Endothelial cell of umbilical vein (primary cell): ENCODE measurements at regions of chr20 and their contacts with region 1.

Region 1: GRCh38 chr20:50790651-50791277 is 4.1 kb upstream of the BCAS4 start:
- DNase-seq: peak; percentile 73
- H3K4me3 ChIP-seq: no peak overlapping the region
- H3K27ac ChIP-seq: peak overlapping the region; percentile 64
- H3K4me1 ChIP-seq: peaks cover 10% of the 10 kb centered on the region
- H3K27me3 ChIP-seq: peaks cover 0 to 4% of the 10 kb centered on the region in 2 experiments
- CTCF ChIP-seq: peak; percentile 87 to 97
- POLR2A ChIP-seq: peak; percentile 71

Region 2: DNA sequence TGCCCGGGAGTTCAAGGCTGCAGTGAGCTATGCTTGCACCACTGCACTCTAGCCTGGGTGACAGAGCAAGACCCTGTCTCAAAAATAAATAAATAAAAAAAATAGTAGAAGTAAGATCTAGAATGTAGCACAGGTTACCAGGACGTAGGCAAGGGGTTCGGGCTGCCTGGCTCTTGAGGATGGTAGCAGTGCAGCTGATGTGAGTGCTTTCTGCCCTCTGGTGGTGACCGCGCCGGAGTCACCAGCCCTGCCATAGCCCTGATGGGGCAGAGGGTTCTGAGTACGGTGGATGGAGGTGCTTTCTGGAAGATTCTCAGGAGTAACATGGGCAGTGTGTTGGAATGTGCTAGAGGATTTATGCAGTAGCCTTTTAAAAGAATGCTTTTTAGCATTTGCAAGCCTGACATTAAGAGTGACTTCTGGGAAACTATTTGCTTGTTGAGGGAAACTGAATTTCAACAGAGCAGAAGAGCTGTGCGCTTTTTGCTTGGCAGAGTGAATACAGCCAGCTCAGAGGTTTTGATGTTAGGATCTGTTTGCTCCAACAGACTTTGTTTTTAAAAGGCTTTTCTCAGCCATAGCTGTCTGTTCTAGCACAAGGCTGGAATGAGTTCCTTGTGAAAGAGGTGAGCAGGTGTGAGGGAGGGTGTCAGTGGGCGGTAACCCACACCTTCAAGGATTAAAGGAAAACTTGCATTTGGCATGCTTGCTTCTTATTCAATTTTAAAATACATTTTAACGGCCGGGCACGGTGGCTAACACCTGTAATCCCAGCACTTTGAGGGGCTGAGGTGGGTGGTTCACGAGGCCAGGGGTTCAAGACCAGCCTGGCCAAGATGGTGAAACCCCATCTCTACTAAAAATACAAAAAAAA is 214.7 kb before region 1 on chr20:
- CTCF ChIA-PET with region 1: no interaction called
- POLR2A ChIA-PET with region 1: no interaction called
- dilution Hi-C with region 1: no loop called
- intact Hi-C with region 1: no loop called
- DNase-seq: peak; percentile 61
- H3K4me3 ChIP-seq: no peak overlapping the region
- H3K27ac ChIP-seq: no peak overlapping the region
- H3K4me1 ChIP-seq: peaks cover 28% of the 10 kb centered on the region
- H3K27me3 ChIP-seq: no peaks in the 10 kb centered on the region
- CTCF ChIP-seq: peak; percentile 81 to 82
- POLR2A ChIP-seq: no peak

Region 3: DNA sequence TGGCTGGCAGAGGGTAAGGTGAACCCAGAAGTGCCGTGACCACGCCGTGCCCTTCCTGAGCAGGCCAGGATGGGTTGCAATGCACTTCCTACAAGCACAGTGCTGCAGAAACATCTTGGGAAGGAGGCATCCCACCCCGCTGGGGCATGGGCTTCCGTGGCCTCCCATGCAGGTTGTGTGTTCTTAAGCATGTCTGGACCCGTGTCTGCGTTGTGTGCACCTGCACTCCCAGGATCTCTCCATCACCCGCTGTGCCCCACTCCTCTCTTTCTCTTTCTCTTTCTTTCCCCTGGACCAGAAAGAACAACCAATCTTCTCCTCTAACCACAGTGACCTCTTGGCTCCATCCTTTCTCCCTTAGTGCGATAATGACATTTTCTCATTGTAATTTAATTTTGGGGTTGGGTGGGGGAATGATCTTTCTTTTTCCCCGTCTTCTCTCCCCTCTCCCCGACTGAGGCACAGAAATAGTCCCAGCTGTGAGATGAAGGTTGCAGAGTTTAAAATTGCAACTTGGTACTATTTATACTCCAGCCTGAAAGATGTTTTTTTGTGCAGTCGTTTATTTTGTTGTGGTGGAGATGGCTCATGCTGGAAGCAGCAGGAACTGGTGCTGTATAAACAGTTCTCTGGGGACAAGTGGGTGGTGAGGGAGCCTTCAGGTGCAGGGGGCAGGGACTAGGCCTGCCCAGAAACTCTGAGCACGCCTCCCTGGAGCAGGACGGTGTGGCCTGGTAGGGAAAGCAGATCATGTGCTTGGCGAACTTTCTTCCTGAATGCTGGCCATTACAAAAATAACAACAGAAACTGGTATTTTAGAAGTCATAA is 24.6 kb after region 1 on chr20:
- CTCF ChIA-PET with region 1: interaction called, 27 read pairs
- POLR2A ChIA-PET with region 1: no interaction called
- dilution Hi-C with region 1: no loop called
- intact Hi-C with region 1: loop called (anchors 1 kb)
- DNase-seq: no peak
- H3K4me3 ChIP-seq: no peak overlapping the region
- H3K27ac ChIP-seq: no peak overlapping the region
- H3K4me1 ChIP-seq: no peaks in the 10 kb centered on the region
- H3K27me3 ChIP-seq: no peaks in the 10 kb centered on the region
- CTCF ChIP-seq: no peak
- POLR2A ChIP-seq: no peak

Region 4: DNA sequence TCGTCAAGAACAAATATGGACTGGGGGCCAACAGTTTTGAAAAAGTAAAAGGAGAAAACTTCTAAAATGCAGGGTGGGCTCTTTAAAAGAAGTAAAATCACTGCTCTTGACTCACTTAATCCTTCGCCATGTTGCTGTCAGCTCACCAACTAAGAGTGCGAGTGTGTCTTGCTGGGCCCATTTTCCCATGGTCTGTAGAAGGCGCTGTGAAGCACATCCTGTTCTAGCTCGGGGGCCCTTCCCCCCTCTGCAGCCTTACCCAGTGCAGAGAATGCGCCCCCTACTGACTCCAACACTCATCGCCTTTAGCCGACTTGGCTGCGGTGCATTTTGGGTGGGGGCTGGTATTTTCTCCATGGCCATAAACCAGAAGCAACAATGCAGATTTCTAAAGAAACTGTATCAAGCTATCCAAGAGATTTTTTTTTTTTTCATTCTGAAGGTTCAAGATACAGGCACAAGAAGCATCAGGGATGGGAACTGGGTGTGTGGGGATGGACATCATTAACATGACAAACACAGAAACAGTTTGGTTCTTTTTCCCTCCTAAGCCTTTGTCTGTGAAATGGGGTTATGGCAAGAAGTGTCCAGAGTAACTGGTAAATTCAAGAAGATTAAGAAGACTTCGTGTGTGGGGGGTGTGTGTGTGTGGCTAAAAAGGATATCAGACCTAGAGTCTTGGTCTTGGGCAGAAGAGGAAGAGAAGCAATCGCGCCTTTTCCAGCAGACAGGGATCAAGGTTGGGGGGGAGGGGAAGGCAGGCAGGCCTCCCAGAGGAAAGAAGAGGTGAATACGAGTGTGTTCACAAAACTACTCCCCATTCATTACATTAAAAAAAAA is 138.8 kb after region 1 on chr20:
- CTCF ChIA-PET with region 1: interaction called, 119 read pairs
- POLR2A ChIA-PET with region 1: interaction called, 6 read pairs
- dilution Hi-C with region 1: no loop called
- intact Hi-C with region 1: loop called (anchors 1 kb)
- DNase-seq: peak; percentile 92
- H3K4me3 ChIP-seq: peak overlapping the region; percentile 63 to 100 (median 90)
- H3K27ac ChIP-seq: peak overlapping the region; percentile 50
- H3K4me1 ChIP-seq: peaks cover 22% of the 10 kb centered on the region
- H3K27me3 ChIP-seq: no peaks in the 10 kb centered on the region
- CTCF ChIP-seq: peak; percentile 95 to 98
- POLR2A ChIP-seq: peak; percentile 15

Region 5: DNA sequence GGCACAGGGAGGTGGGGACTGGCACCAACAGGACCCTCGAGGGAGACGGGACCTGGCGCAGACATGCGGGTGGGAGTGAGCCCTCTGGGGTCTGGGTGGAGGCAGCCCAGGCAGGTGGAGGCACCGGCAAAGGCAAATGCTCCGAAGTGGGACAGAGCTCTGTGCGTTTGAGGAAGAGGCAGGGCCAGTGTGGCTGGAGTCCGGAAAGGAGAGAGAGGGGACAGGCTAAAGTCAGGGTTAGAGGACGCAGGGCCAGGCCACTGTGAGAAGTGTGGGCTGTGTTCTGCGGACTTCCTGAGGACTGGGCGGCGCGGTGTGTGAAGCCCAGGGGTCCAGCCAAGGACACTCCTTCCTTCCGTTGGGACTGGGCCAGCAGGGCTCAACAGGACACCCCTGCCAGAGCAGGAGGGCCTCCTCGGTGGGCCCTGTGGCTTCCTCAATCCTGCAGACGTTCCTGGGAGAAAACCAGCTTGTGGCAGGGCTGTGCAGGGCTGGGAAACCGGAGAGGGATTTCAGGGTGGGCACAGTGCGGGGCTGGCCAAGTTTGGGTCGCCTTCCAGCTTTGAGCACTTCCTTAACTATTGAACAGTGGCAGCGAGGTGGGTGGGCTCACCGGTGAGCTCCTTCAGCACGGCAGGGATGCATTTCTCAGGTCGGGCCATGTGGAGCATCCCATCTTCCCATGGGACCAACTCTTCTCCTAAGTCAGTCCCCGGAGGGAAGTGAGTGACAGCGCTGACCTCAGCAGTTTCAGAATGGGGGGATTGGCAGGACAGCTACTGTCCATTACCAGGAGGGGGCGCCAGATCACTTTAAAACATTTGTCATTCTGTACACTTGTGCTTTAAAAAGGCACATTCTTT is 190.3 kb after region 1 on chr20:
- CTCF ChIA-PET with region 1: interaction called, 28 read pairs
- POLR2A ChIA-PET with region 1: no interaction called
- dilution Hi-C with region 1: no loop called
- intact Hi-C with region 1: loop called (anchors 1 kb)
- DNase-seq: peak; percentile 58
- H3K4me3 ChIP-seq: no peak overlapping the region
- H3K27ac ChIP-seq: no peak overlapping the region
- H3K4me1 ChIP-seq: no peaks in the 10 kb centered on the region
- H3K27me3 ChIP-seq: peaks cover 2 to 3% of the 10 kb centered on the region in 2 experiments
- CTCF ChIP-seq: peak; percentile 84 to 88
- POLR2A ChIP-seq: no peak